ENCODE measurements at regions of chr18 and their contacts with region 1.

Region 1: DNA sequence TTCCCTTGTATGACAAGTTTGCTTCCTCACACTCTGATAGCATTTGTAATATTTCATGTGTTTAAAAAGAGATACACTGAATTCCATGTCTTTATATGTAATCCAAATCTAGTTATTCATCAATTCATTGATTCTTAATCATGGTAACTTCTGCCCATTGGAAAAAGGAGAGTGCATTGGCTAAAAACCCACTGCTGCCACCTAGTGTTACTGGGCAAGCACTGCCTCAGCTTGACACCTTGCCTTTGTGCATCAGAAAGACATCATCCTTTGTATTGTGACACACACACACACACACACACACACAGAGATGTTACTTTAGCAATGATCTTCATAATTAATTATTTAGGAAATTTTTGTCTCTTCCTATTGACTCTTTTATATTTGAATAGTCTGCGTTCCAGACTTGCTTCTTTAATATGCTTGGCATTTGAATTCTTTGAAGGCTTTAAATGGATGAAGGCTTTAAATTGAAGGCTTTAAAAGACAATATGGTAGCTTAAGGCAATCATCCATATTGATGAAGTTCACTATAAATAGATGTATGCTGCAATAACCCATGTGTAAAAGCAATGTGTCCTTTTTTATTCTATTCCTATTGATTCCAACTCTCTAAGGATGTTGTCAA is 414.2 kb upstream of the CHST9 start:
- DNase-seq: peak; percentile 49
- H3K4me3 Mint-ChIP-seq: no peak overlapping the region
- H3K27ac Mint-ChIP-seq: no peak overlapping the region
- H3K4me1 Mint-ChIP-seq: no peaks in the 10 kb centered on the region
- H3K27me3 Mint-ChIP-seq: no peaks in the 10 kb centered on the region

Region 2: DNA sequence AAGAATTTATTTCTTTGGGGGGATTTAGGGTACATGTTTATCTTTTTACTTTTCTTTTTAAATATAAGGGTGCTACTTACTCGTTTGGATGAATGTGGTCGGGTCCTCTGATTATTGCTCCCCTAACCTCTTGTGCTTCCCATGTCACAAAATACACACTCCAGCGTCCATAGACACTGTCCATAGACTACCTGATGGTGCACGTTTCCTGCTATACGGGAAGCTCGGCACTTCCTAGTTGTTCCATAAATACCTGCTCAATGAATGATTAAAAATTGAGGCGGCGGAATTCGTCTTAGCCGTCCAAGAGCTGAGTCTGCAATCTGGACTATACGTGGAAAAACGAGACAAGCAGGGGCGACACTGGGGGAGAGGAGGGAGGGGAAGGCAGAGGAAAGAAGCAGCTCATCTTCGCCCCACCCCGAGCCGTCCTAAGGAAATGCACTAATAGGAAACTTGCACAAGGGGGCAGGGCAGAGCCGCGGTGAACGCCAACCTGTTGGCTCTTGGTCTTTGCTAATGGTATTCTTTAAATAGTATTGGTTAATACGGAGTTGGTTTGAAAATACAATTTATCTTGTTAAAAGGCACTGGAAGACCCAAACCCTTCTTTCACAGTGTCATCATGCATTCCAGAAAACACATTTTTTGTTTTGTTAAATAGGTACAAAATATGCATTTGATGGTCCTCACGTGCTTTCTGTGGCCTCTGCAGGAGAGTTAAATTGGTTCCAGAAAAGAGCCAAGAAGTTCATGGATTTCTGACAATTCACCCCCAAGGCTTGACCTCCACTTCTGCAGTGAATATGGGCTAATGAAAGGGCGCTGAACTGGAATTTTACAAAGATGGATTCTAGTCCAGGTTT is 977.9 kb before region 1 on chr18:
- CTCF ChIA-PET with region 1: no interaction called
- intact Hi-C with region 1: loop called (anchors 2 kb)
- DNase-seq: peak; percentile 45
- H3K4me3 Mint-ChIP-seq: no peak overlapping the region
- H3K27ac Mint-ChIP-seq: no peak overlapping the region
- H3K4me1 Mint-ChIP-seq: no peaks in the 10 kb centered on the region
- H3K27me3 Mint-ChIP-seq: peaks cover 13% of the 10 kb centered on the region

Region 3: DNA sequence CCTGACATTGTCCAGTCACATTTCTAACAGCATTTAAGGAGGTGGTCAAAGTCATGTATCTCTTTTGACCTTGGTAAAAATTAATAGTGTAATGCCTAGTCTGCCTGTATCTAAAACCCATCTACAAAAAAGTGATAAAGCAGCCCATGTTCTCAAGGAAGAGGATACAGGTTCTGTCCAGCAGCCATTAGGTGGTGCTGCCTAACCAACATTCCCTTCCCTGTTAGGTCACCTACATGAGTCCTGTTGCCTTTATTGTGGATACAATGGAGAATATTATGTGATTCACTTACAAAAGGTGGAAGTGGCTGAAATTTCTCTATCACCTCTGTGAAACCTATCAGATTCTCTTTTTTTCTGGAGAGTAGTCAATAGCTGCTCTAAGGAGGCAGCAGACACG is 786.3 kb before region 1 on chr18:
- CTCF ChIA-PET with region 1: no interaction called
- intact Hi-C with region 1: loop called (anchors 5 kb)
- DNase-seq: peak; percentile 22
- H3K4me3 Mint-ChIP-seq: no peak overlapping the region
- H3K27ac Mint-ChIP-seq: no peak overlapping the region
- H3K4me1 Mint-ChIP-seq: no peaks in the 10 kb centered on the region
- H3K27me3 Mint-ChIP-seq: peaks cover 2% of the 10 kb centered on the region

Region 4: DNA sequence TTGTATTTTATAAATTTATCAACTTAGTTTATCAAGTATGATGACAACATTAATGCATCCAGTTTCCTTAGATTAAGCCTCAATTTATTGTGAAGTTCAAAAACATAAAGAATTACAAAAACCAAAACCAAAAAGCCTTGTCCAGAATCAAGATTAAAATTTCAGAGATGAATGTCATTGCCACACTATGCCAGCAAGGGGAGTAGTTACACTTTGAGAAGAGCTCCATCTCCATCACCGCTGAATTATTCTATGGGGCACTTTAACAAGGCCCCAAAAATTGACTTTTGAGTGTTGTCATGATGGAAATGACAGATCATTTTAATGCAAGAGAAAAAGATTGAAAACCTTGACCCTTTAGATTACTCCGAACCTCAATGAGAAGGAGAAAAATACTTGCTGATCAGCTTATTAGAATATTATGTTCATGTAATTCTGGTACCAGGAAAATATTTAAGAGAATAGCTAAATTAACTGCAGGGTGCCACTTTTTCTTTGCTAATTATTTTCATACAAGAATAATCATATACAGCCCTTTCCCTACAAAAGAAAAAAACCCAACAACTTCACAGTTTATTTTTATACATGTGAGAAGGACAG is 581.3 kb before region 1 on chr18:
- CTCF ChIA-PET with region 1: no interaction called
- intact Hi-C with region 1: loop called (anchors 2 kb)
- DNase-seq: no peak
- H3K4me3 Mint-ChIP-seq: no peak overlapping the region
- H3K27ac Mint-ChIP-seq: no peak overlapping the region
- H3K4me1 Mint-ChIP-seq: no peaks in the 10 kb centered on the region
- H3K27me3 Mint-ChIP-seq: no peaks in the 10 kb centered on the region

Region 5: DNA sequence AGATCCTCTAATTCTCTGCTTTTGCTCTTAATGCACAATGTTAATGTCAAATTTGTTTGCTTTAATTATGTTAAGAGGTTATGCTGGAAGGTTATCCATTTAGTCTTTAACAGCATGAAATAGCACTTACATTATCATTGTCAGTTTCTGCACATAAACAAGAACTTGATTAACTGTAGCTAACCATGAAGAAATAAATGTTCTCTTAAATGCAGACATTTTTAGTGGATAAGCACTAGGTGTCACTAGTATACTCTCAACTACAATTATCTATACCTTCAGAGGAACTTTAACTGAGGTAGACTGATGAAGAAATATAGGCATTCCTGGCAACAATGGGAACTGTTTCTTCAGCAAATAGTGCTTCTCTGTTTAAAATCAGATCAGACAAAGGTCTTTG is 235.4 kb before region 1 on chr18:
- CTCF ChIA-PET with region 1: no interaction called
- intact Hi-C with region 1: loop called (anchors 1 kb)
- DNase-seq: no peak
- H3K4me3 Mint-ChIP-seq: no peak overlapping the region
- H3K27ac Mint-ChIP-seq: no peak overlapping the region
- H3K4me1 Mint-ChIP-seq: no peaks in the 10 kb centered on the region
- H3K27me3 Mint-ChIP-seq: no peaks in the 10 kb centered on the region

Region 6: DNA sequence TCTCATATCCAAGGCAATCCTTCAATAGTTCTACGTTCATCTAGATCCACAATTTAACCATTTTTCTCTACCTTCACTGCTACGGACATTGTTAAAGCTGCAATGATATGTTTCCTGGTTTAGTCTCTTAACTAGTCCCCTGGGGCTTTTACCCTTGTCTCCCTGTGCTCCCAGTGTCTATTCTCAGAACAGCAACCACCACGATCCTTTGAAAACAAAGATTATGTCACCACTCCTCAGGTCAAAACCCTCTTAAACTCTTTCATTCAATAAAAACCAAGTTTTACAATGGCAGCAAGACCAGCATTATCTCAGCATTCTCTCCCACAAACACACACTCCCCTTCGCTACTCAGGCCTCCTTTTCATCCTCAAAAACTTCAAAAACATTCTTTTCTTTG is 116.0 kb before region 1 on chr18:
- CTCF ChIA-PET with region 1: no interaction called
- intact Hi-C with region 1: no loop called
- DNase-seq: no peak
- H3K4me3 Mint-ChIP-seq: no peak overlapping the region
- H3K27ac Mint-ChIP-seq: no peak overlapping the region
- H3K4me1 Mint-ChIP-seq: no peaks in the 10 kb centered on the region
- H3K27me3 Mint-ChIP-seq: no peaks in the 10 kb centered on the region

Measured in activated naive CD4-positive, alpha-beta T cell treated with anti-CD3 and anti-CD28 coated beads for 36 hours (primary cell).